HEK293T (cell line): ENCODE measurements at regions of chr1 and their contacts with region 1.

Region 1: DNA sequence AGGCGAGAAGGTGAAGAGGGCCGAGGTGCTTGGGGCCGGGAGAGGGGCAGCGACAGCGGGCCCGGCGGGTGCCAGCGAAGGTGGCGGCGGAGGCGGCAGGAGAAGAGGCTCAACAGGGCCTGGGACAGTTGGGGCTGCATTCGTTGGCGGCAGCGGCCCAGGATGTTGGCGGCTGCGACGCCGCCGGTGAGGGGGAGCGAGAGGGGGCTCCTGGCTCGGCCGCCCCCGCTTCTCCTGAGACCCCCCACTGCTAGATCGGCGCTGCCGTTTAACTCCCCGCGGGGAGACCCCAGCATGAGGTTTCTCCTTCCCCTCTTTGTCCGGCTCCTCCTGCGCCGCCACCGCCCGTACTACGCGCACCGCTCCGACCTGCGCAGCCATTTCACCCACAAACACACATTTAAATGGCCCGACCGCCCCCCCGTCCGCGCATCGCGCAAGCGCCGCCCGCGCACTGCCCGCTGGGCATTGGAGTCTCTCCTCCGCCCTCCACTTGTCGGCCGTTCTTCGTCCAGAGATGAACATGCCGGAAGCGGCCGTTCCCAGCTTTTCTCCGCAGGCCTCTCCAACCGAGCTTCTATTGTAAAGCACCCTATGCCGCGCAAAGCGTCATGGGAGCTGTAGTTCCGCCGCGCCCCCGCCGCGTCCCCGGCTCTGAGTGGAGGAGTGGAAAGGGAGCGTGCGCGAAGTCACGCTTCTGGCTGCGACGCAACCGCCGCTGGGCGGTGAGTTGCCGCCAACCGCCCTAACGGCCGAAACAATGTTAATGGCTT is at the start of gene RSBN1:
- DNase-seq: peak; percentile 96

Region 2: DNA sequence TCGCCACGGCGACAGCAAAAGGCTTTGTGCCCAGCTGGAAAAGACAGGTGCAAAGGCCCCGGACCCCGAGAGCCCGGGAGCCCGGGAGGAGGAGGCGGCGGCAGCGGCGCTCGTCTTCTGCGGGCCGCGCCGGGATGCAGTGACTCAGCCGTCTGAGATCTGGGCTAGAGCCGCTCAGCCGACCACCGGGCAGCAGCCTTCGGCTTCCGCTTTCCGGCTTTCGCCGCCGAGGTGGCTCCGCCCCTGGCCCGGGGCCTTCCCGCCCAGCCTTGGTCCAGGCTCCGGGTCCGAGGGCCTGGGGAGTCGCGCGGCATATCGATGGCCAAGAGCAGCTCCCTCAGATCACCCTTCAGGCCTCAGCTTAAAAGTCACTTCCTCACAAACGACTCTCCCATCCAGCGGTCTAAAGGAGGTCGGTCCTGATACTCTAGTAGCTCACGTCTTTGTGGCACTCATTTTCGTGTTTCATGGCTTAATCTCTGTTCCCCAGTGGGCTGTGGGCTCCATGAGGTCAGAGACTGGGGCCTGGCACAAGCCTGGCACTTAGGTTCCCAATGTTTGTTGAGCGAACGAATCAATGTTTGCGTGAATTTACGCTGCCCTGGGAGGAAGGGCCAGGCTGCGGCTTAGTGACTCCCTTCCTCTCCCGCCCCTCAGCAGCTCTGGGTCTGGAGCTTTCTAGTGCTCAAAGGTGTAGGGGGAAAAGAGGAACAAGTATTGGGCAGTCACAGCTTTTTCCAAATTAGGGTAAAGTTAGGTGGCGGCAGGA is 52.6 kb before region 1 on chr1 and contains the start of gene PHTF1:
- CTCF ChIA-PET with region 1: no interaction called
- POLR2A ChIA-PET with region 1: interaction called, 31 read pairs
- DNase-seq: peak; percentile 81

Region 3: DNA sequence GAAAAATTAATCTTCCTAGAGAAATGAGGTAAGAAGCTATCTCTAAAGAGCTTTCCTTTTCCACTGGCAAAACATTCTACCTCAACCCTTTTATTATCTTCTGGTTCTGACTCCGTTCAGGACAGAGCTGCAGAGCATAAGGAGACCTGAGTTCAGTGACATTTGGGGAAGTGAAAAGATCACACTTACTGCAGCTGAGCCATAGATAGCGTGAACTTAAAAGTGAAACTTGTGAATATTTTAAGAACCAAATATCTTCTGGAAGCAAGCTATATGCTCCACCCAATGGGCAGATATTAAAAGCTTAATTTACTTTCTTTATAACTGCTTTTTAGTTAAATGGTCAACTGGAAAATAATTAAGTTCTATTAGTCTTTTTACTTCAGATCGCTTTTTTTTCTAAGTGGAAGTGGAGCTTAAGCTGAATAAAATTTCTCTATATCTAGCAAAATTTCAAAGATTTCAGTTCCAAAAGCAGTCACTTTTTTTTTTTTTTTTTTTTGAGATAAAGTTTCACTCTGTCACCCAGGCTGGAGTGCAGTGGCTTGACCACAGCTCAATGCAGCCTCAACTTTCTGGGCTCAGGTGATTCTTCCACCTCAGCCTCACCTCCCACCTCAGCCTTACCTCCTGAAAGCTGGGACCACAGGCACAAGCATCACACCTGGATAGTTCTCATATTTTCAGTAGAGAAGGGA is 47.6 kb after region 1 on chr1:
- CTCF ChIA-PET with region 1: no interaction called
- POLR2A ChIA-PET with region 1: no interaction called
- DNase-seq: no peak

Region 4: GRCh38 chr1:113904674-113905434 is 92.8 kb after region 1 on chr1 and contains the starts of genes AP4B1 and DCLRE1B:
- CTCF ChIA-PET with region 1: interaction called, 7 read pairs
- POLR2A ChIA-PET with region 1: interaction called, 11 read pairs
- DNase-seq: peak; percentile 100